Naive thymus-derived CD4-positive, alpha-beta T cell (primary cell): ENCODE measurements at regions of chr15 and their contacts with region 1.

Region 1: DNA sequence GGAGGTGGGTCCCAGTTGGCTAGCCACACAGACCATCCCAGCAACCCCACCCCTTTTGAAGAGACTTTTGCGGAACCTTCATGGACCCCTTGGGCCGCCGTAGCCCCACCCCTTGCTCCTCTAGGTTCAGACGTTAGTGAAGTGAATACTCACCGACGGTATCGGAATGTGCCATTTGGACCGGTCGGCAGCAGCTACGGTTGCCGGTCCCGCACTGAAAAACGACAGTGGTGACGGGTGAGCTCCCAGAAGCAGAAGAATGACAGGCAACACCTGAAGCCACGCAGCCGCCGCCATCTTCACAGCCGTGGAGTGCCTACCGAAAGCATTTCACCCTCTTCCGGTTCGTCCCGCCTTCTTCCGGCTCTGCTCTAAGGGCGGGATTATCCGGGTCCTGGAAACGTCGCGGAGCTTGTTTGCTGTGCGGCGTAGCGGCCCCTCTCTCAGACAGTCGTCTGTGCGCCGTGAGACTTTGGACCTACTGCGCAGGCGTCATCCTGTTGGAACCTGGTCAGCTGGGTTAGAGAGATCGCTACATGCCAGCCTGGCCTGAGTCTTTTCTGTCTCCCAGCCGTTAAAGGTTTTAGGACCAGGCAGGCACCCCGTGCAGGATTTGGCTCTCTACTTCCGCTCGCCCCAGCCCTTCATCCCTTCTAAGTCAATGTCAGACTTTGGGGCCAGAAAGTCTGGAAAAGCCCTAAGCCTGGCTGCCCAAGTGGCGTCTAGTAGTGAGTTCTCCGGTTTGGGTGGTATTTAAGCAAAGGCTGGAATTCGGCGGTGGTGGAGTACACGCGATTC is at the starts of genes GANC and TMEM87A:
- DNase-seq: peak; percentile 70 to 96 (median 94)
- ATAC-seq: peak; percentile 95
- H3K4me3 ChIP-seq: peak within 1 kb of the TSS; percentile 71
- H3K4me3 Mint-ChIP-seq: peak within 1 kb of the TSS; percentile 91 to 100 (median 97)
- H3K27ac ChIP-seq: peak within 1 kb of the TSS; percentile 94
- H3K27ac Mint-ChIP-seq: peak within 1 kb of the TSS; percentile 97 to 100 (median 100)
- H3K4me1 ChIP-seq: peaks cover 25 to 26% of the 10 kb centered on the region in 2 donors
- H3K4me1 Mint-ChIP-seq: peaks cover 30 to 76% (median 67%) of the 10 kb centered on the region in 7 donors
- H3K27me3 ChIP-seq: no peaks in the 10 kb centered on the region
- H3K27me3 Mint-ChIP-seq: no peaks in the 10 kb centered on the region
- total RNA-seq, gene GANC: 31.3 to 57.2 (median 45.4) TPM
- total RNA-seq, gene TMEM87A: 41.8 to 61.8 (median 53.7) TPM

Region 2: DNA sequence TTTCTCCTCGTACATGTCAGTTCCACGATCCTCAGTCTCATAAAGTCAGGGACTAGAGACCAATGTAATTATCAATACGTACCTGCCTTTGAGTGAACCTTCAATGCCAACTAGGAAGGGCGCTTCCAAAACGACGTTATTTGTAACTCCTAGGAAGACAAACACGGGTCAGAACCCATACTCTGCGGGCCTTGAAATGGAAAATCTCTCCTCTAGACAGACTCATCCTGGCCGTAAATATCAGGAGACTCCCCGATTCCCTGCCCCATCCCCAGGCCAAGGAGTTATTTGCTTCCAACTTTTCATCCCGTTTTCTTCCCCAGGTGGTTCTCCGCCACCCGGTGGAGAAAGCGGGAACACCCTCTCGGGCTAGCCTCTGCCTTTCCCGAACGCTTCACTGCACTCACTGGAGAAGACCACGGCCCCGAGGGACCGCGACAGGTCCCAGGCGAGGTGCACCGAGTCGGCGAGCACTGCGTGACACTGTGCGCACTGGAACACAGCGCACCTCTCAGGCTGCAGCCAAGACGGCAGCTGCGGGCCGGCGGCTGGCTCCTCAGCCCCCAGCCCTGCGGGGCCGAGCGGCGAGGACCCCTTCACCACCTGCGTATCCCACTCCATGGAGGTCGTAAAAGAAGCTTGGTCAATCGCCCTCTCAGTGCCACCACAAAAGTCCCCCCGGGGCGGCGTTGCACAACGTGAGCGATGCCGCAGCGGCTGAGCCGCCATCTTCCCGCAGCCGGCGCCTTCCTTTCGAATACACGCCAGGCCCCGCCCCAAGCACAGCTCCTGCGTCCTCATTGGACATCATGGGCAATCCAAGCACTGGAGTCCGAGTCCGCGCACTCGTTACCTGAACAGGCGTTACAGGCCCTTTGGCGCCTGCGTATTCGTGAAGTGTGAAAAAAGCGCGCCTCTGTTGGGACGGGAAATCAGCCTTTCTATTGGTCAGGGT is 941.2 kb before region 1 on chr15 and contains the start of gene OIP5:
- CTCF ChIA-PET with region 1: no interaction called
- POLR2A ChIA-PET with region 1: no interaction called
- intact Hi-C with region 1: loop called in 1 of 2 experiments (anchors 2 kb)
- DNase-seq: peak; percentile 83 to 99 (median 97)
- ATAC-seq: peak; percentile 98
- H3K4me3 ChIP-seq: peak within 1 kb of the TSS; percentile 95
- H3K4me3 Mint-ChIP-seq: peak within 1 kb of the TSS; percentile 87 to 100 (median 97)
- H3K27ac ChIP-seq: peak within 1 kb of the TSS; percentile 52
- H3K27ac Mint-ChIP-seq: peak within 1 kb of the TSS; percentile 77 to 97 (median 91)
- H3K4me1 ChIP-seq: peaks cover 9 to 13% of the 10 kb centered on the region in 2 donors
- H3K4me1 Mint-ChIP-seq: peaks cover 12 to 32% (median 29%) of the 10 kb centered on the region in 7 donors
- H3K27me3 ChIP-seq: no peaks in the 10 kb centered on the region
- H3K27me3 Mint-ChIP-seq: no peaks in the 10 kb centered on the region
- total RNA-seq, gene OIP5: 0.32 to 15.2 (median 0.54) TPM in 4 of 5 experiments, not detected in the other

Region 3: GRCh38 chr15:41727143-41727542 is 546.2 kb before region 1 on chr15:
- CTCF ChIA-PET with region 1: no interaction called
- POLR2A ChIA-PET with region 1: no interaction called
- intact Hi-C with region 1: no loop called
- DNase-seq: no peak
- ATAC-seq: no peak
- H3K4me3 ChIP-seq: no peak overlapping the region
- H3K4me3 Mint-ChIP-seq: no peak overlapping the region
- H3K27ac ChIP-seq: no peak overlapping the region
- H3K27ac Mint-ChIP-seq: no peak overlapping the region
- H3K4me1 ChIP-seq: no peaks in the 10 kb centered on the region
- H3K4me1 Mint-ChIP-seq: peaks cover 0 to 24% (median 7%) of the 10 kb centered on the region in 7 donors
- H3K27me3 ChIP-seq: no peaks in the 10 kb centered on the region
- H3K27me3 Mint-ChIP-seq: no peaks in the 10 kb centered on the region

Region 4: GRCh38 chr15:41972253-41973242 is 300.8 kb before region 1 on chr15 and contains the start of gene EHD4:
- CTCF ChIA-PET with region 1: no interaction called
- POLR2A ChIA-PET with region 1: no interaction called
- intact Hi-C with region 1: loop called in 1 of 2 experiments (anchors 5 kb)
- DNase-seq: peak; percentile 85 to 96 (median 94)
- ATAC-seq: peak; percentile 91
- H3K4me3 ChIP-seq: peak within 1 kb of the TSS; percentile 87
- H3K4me3 Mint-ChIP-seq: peak within 1 kb of the TSS; percentile 85 to 97 (median 94)
- H3K27ac ChIP-seq: peak within 1 kb of the TSS; percentile 83
- H3K27ac Mint-ChIP-seq: peak within 1 kb of the TSS; percentile 90 to 97 (median 95)
- H3K4me1 ChIP-seq: peaks cover 19 to 23% of the 10 kb centered on the region in 2 donors
- H3K4me1 Mint-ChIP-seq: peaks cover 31 to 55% (median 45%) of the 10 kb centered on the region in 7 donors
- H3K27me3 ChIP-seq: no peaks in the 10 kb centered on the region
- H3K27me3 Mint-ChIP-seq: peaks cover 0 to 17% (median 7%) of the 10 kb centered on the region in 5 donors
- total RNA-seq, gene EHD4: 10.4 to 48.3 (median 23.7) TPM

Region 5: GRCh38 chr15:42364529-42364928 is 91.2 kb after region 1 on chr15:
- CTCF ChIA-PET with region 1: no interaction called
- POLR2A ChIA-PET with region 1: no interaction called
- intact Hi-C with region 1: no loop called
- DNase-seq: no peak
- ATAC-seq: no peak
- H3K4me3 ChIP-seq: no peak overlapping the region
- H3K4me3 Mint-ChIP-seq: no peak overlapping the region
- H3K27ac ChIP-seq: no peak overlapping the region
- H3K27ac Mint-ChIP-seq: no peak overlapping the region
- H3K4me1 ChIP-seq: no peaks in the 10 kb centered on the region
- H3K4me1 Mint-ChIP-seq: peaks cover 0 to 3% (median 0%) of the 10 kb centered on the region in 7 donors
- H3K27me3 ChIP-seq: no peaks in the 10 kb centered on the region
- H3K27me3 Mint-ChIP-seq: no peaks in the 10 kb centered on the region

Region 6: GRCh38 chr15:42495361-42496212 is 222.3 kb after region 1 on chr15 and contains the start of gene SNAP23:
- CTCF ChIA-PET with region 1: interaction called, 3 read pairs
- POLR2A ChIA-PET with region 1: interaction called, 9 read pairs
- intact Hi-C with region 1: loop called (anchors 1 kb)
- DNase-seq: peak; percentile 66 to 87 (median 80)
- ATAC-seq: peak; percentile 93
- H3K4me3 ChIP-seq: peak within 1 kb of the TSS; percentile 88
- H3K4me3 Mint-ChIP-seq: peak within 1 kb of the TSS; percentile 94 to 99 (median 97)
- H3K27ac ChIP-seq: peak within 1 kb of the TSS; percentile 79
- H3K27ac Mint-ChIP-seq: peak within 1 kb of the TSS; percentile 90 to 99 (median 96)
- H3K4me1 ChIP-seq: peaks cover 14 to 17% of the 10 kb centered on the region in 2 donors
- H3K4me1 Mint-ChIP-seq: peaks cover 43 to 92% (median 80%) of the 10 kb centered on the region in 7 donors
- H3K27me3 ChIP-seq: no peaks in the 10 kb centered on the region
- H3K27me3 Mint-ChIP-seq: peaks cover 0 to 2% (median 0%) of the 10 kb centered on the region in 5 donors
- total RNA-seq, gene SNAP23: 60.0 to 80.0 (median 70.6) TPM

Region 7: DNA sequence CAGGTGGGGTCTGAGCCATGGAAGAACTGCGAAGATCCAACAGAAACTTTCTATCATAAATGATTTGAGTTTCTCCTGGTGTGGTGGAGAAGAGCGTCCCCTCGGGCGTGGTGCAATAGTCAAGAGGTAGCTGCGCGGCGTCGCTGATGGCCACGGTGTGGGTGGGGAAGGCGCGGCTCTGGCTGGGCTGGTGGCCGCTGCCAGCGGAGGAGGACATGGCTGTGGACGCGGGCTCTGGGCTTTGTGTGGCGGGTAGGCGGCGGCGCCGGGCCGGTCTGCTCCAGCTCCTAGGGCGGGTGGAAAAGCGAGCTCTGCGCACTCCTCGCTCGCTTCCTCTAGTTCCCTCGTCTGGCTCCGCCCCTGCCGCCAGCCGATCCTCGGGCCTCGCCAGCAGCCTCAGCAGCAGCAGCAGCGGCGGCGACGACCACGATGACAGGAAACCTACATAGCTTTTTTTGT is 308.0 kb after region 1 on chr15:
- CTCF ChIA-PET with region 1: no interaction called
- POLR2A ChIA-PET with region 1: no interaction called
- intact Hi-C with region 1: loop called in 1 of 2 experiments (anchors 1 kb)
- DNase-seq: peak; percentile 63 to 80 (median 77)
- ATAC-seq: peak; percentile 98
- H3K4me3 ChIP-seq: peak overlapping the region; percentile 33
- H3K4me3 Mint-ChIP-seq: peak overlapping the region; percentile 85 to 96 (median 90)
- H3K27ac ChIP-seq: peak overlapping the region; percentile 71
- H3K27ac Mint-ChIP-seq: peak overlapping the region; percentile 77 to 97 (median 89)
- H3K4me1 ChIP-seq: peaks cover 8 to 11% of the 10 kb centered on the region in 2 donors
- H3K4me1 Mint-ChIP-seq: peaks cover 20 to 51% (median 37%) of the 10 kb centered on the region in 7 donors
- H3K27me3 ChIP-seq: no peaks in the 10 kb centered on the region
- H3K27me3 Mint-ChIP-seq: peaks cover 4 to 32% (median 10%) of the 10 kb centered on the region in 5 donors

Region 8: DNA sequence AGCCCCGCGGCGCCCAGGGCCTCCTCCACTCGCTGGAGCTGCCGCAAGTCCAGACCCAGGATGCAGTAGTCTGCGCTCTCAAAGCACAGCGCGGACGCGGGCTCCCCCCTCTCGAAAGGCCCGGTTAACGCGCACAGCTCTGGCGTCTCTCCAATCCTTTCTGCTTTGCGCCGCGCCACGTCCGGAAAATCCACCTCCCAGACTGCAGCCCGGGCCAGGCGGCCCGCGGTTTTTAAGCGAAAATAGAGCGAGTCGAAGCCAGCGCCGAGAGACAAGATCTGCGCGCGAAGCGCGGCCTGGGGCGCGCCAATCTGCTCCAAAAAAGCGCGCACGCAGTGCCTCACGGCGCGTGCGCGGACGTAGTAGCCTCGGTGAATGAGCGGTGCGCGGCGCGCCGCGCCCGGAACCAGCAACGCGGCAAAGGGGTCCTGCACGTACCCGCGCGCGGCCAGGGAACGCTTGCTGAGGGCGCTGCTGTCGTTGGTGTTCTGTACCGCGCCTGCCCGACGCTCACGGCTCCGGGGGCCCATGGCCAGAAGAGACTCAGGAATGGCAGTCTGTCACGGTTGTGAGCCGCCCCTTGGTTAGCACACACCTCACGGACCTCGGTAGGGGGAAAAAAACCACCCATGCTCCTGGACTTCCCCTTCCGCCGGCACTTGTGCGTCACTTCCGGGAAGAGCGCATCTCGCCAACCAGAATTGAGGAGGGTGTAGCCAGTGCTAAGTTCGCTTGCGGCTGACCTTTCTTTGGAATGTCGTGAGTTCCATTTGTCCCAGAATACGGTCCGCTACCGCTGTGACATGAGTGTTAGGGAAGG is 1056.9 kb after region 1 on chr15 and contains the start of gene LCMT2:
- CTCF ChIA-PET with region 1: no interaction called
- POLR2A ChIA-PET with region 1: no interaction called
- intact Hi-C with region 1: loop called (anchors 5 to 10 kb)
- DNase-seq: peak; percentile 80 to 95 (median 92)
- ATAC-seq: peak; percentile 92
- H3K4me3 ChIP-seq: peak within 1 kb of the TSS; percentile 84
- H3K4me3 Mint-ChIP-seq: peak within 1 kb of the TSS; percentile 89 to 98 (median 96)
- H3K27ac ChIP-seq: peak within 1 kb of the TSS; percentile 88
- H3K27ac Mint-ChIP-seq: peak within 1 kb of the TSS; percentile 93 to 99 (median 99)
- H3K4me1 ChIP-seq: peaks cover 19 to 22% of the 10 kb centered on the region in 2 donors
- H3K4me1 Mint-ChIP-seq: peaks cover 19 to 54% (median 46%) of the 10 kb centered on the region in 7 donors
- H3K27me3 ChIP-seq: no peaks in the 10 kb centered on the region
- H3K27me3 Mint-ChIP-seq: peaks cover 0 to 4% (median 0%) of the 10 kb centered on the region in 5 donors
- total RNA-seq, gene LCMT2: 10.1 to 19.1 (median 15.0) TPM

Region 9: DNA sequence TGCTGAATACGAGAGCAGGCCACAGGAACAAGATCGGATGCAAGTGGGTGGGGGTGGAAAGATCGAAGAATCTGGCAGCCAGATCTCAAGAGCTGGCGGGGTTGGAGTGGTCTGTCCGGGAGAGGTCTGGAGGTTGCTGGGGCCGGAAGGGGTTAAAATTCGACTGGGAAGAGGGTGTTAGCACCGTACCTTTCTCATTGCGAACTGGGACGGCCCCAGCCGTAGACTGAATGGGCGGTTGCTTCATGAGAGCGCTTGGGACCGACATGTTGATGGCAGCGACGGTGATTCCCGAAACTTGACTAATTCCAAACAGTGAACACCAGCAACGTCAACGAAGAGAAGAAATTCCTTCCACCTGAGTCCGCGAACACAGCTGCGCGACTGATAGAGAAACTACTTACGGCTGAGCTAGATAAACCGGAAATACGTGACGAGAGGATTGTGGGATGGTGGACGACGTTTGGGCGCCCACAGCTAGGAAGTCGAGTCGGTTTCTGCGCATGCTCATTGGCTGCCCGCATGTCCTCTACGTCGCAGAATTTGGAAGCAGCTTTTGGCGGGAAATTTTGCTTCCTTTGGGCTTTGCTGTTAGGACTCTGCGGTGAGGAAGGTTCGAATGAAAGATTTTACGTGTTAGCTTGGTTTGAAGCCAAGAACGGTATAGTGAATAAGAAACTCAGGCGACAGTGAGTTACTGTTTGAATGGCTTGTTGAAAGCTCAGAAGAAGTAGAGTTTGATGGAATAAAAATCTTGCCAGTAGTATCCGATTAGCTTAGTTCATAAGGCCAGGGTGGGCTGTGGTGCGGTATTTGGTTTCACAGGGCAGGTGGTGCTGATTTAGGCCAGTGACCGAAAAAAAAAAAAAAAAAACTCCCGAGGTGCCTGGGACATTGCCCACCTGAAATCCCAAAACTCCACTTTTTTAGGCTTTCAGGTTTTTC is 1551.3 kb after region 1 on chr15 and contains the start of gene MFAP1:
- CTCF ChIA-PET with region 1: no interaction called
- POLR2A ChIA-PET with region 1: no interaction called
- intact Hi-C with region 1: loop called (anchors 5 to 10 kb)
- DNase-seq: peak; percentile 63 to 94 (median 89)
- ATAC-seq: peak; percentile 94
- H3K4me3 ChIP-seq: peak within 1 kb of the TSS; percentile 100
- H3K4me3 Mint-ChIP-seq: peak within 1 kb of the TSS; percentile 94 to 100 (median 98)
- H3K27ac ChIP-seq: peak within 1 kb of the TSS; percentile 97
- H3K27ac Mint-ChIP-seq: peak within 1 kb of the TSS; percentile 95 to 99 (median 98)
- H3K4me1 ChIP-seq: peaks cover 32 to 34% of the 10 kb centered on the region in 2 donors
- H3K4me1 Mint-ChIP-seq: peaks cover 37 to 81% (median 53%) of the 10 kb centered on the region in 7 donors
- H3K27me3 ChIP-seq: no peaks in the 10 kb centered on the region
- H3K27me3 Mint-ChIP-seq: no peaks in the 10 kb centered on the region
- total RNA-seq, gene MFAP1: 8.5 to 37.3 (median 21.8) TPM